ENCODE measurements at regions of chr3 and their contacts with region 1.

Region 1: DNA sequence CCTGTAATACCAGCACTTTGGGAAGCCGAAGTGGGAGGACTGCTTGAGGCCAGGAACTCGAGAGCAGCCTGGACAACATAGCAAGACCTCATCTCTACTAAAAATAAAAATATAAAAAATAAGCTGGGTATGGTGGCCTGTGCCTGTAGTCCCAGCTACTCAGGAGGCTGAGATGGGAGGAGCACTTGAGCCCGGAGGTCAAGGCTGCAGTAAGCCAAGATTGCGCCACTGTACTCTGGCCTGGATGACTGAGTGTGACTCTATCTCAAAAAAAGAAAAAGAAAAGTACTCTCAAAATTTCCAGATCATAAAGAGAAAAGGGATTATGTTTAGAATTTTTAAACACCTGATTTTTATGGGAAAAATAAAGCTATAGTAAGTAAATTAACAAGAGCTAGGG is 24.1 kb downstream of the SLC51A start:
- DNase-seq: no peak
- H3K4me3 ChIP-seq: no peak overlapping the region
- H3K4me3 Mint-ChIP-seq: no peak overlapping the region
- H3K27ac ChIP-seq: no peak overlapping the region
- H3K27ac Mint-ChIP-seq: peak overlapping the region in 1 of 7 donors; percentile 68
- H3K4me1 ChIP-seq: no peaks in the 10 kb centered on the region
- H3K4me1 Mint-ChIP-seq: peaks cover 0 to 3% (median under 1%) of the 10 kb centered on the region in 4 donors
- H3K27me3 ChIP-seq: no peaks in the 10 kb centered on the region
- H3K27me3 Mint-ChIP-seq: no peaks in the 10 kb centered on the region

Region 2: DNA sequence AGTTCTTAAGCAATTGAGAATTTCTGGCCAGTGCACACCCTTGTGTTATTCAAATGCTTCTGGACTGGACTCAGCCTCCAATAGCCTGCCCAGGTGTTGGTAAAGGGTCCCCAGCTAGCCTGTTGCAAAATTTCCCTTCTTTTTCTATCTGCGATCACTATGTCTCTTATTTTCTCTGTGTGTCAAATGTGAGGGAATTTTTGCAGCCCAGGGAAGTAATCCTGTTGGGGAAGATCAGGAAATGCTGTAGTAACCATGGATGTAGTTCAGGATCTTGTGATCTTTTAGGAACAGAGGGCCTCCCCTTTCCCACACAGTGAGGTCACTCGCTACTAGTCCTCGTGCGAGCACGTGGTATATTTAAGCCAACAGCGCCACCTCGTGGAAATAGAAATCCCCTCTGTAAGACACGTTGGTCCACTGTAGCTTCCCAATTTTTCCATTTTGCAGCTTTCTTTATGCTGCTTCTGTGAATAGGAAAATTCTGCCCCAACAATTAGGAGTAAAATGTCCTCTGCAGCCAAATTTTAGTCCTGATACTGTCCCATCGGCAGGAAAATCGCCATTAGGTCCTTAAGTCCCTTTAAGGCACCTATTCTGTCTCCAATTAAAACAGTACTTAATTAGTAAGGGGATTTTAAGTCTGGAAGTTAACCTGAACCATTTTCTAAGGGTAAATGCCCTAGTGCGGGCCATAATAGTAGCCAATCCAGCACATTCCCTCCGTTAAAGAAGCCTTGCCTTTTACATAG is 278.7 kb after region 1 on chr3:
- CTCF ChIA-PET with region 1: interaction called, 10 read pairs
- POLR2A ChIA-PET with region 1: no interaction called
- intact Hi-C with region 1: no loop called
- DNase-seq: peak; percentile 39 to 62 (median 48)
- H3K4me3 ChIP-seq: no peak overlapping the region
- H3K4me3 Mint-ChIP-seq: no peak overlapping the region
- H3K27ac ChIP-seq: no peak overlapping the region
- H3K27ac Mint-ChIP-seq: peak overlapping the region in 2 of 7 donors; percentile 65 to 74
- H3K4me1 ChIP-seq: no peaks in the 10 kb centered on the region
- H3K4me1 Mint-ChIP-seq: no peaks in the 10 kb centered on the region
- H3K27me3 ChIP-seq: no peaks in the 10 kb centered on the region
- H3K27me3 Mint-ChIP-seq: peaks cover 0 to 2% of the 10 kb centered on the region in 2 donors

Region 3: GRCh38 chr3:196568246-196569002 is 328.0 kb after region 1 on chr3 and contains the starts of genes FBXO45 and WDR53:
- CTCF ChIA-PET with region 1: no interaction called
- POLR2A ChIA-PET with region 1: no interaction called
- intact Hi-C with region 1: no loop called
- DNase-seq: peak; percentile 95 to 97 (median 96)
- H3K4me3 ChIP-seq: peak within 1 kb of the TSS; percentile 75 to 97
- H3K4me3 Mint-ChIP-seq: peak within 1 kb of the TSS; percentile 95 to 99 (median 98)
- H3K27ac ChIP-seq: peak within 1 kb of the TSS; percentile 84
- H3K27ac Mint-ChIP-seq: peak within 1 kb of the TSS; percentile 97 to 99 (median 99)
- H3K4me1 ChIP-seq: peaks cover 60% of the 10 kb centered on the region
- H3K4me1 Mint-ChIP-seq: peaks cover 31 to 52% (median 42%) of the 10 kb centered on the region in 4 donors
- H3K27me3 ChIP-seq: no peaks in the 10 kb centered on the region
- H3K27me3 Mint-ChIP-seq: no peaks in the 10 kb centered on the region
- total RNA-seq, gene FBXO45: 10.9 to 12.0 TPM
- total RNA-seq, gene WDR53: 37.5 to 38.7 TPM